ENCODE measurements at regions of chr2 and their contacts with region 1.

Region 1: GRCh38 chr2:218892693-218893348 is 12.2 kb downstream of the WNT10A start:
- DNase-seq: peak in 1 of 2 experiments; percentile 82
- H3K4me3 ChIP-seq: peak overlapping the region in 3 of 4 experiments; percentile 26 to 55 (median 32); a peak in 5 of 8 replicates
- H3K27ac ChIP-seq: no peak overlapping the region
- H3K4me1 ChIP-seq: peaks cover 3 to 46% (median 17%) of the 10 kb centered on the region in 4 experiments
- H3K27me3 ChIP-seq: peaks cover 80 to 95% (median 92%) of the 10 kb centered on the region in 4 experiments
- CTCF ChIP-seq: peak in 2 of 3 experiments; percentile 43 to 62; a peak in 2 of 4 replicates
- EP300 ChIP-seq: no peak
- POLR2A ChIP-seq: no peak
- RAD21 ChIP-seq: peak in 1 of 2 experiments; percentile 9; a peak in 1 of 4 replicates

Region 2: DNA sequence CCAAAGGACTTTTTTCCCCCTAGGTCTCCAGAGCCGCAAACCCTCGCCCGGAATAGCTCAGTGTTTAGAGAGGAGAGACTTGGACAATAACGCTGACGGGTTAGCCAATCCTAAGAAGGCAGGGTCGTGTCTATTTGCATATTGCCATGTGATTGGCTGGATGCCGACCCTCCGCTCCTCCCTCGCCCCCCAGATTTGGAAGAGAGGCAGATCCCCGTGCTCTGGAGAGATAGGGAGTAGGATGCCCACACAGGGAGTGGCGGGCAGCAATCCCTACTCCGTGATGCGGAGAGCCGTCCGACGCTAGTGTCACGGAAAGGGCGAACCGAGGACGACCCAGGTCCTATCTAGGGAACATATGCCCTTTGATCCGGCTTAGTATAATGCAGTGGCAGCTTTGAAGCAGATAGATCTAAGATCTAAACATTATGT is 31.9 kb before region 1 on chr2:
- CTCF ChIA-PET with region 1: interaction called, 22 read pairs
- POLR2A ChIA-PET with region 1: interaction called, 3 read pairs
- DNase-seq: peak; percentile 80 to 82
- H3K4me3 ChIP-seq: peak overlapping the region in 2 of 4 experiments; percentile 19 to 53; a peak in 3 of 8 replicates
- H3K27ac ChIP-seq: no peak overlapping the region
- H3K4me1 ChIP-seq: peaks cover 6 to 33% (median 17%) of the 10 kb centered on the region in 4 experiments
- H3K27me3 ChIP-seq: peaks cover 67 to 94% (median 90%) of the 10 kb centered on the region in 4 experiments
- CTCF ChIP-seq: no peak
- EP300 ChIP-seq: no peak
- POLR2A ChIP-seq: no peak
- RAD21 ChIP-seq: no peak

Region 3: GRCh38 chr2:218908721-218909619 is 16.1 kb after region 1 on chr2:
- CTCF ChIA-PET with region 1: interaction called, 66 read pairs
- POLR2A ChIA-PET with region 1: interaction called, 10 read pairs
- DNase-seq: peak; percentile 89 to 96
- H3K4me3 ChIP-seq: peak overlapping the region; percentile 75 to 90 (median 82)
- H3K27ac ChIP-seq: peak overlapping the region; percentile 73; the same call in 1 of the 2 replicates
- H3K4me1 ChIP-seq: peaks cover 0 to 4% (median 1%) of the 10 kb centered on the region in 4 experiments; a peak in 2 of 7 replicates
- H3K27me3 ChIP-seq: peaks cover 2 to 28% (median 17%) of the 10 kb centered on the region in 4 experiments; a peak in 6 of 7 replicates
- CTCF ChIP-seq: no peak
- EP300 ChIP-seq: no peak
- POLR2A ChIP-seq: peak; percentile 61 to 95
- RAD21 ChIP-seq: no peak

Region 4: DNA sequence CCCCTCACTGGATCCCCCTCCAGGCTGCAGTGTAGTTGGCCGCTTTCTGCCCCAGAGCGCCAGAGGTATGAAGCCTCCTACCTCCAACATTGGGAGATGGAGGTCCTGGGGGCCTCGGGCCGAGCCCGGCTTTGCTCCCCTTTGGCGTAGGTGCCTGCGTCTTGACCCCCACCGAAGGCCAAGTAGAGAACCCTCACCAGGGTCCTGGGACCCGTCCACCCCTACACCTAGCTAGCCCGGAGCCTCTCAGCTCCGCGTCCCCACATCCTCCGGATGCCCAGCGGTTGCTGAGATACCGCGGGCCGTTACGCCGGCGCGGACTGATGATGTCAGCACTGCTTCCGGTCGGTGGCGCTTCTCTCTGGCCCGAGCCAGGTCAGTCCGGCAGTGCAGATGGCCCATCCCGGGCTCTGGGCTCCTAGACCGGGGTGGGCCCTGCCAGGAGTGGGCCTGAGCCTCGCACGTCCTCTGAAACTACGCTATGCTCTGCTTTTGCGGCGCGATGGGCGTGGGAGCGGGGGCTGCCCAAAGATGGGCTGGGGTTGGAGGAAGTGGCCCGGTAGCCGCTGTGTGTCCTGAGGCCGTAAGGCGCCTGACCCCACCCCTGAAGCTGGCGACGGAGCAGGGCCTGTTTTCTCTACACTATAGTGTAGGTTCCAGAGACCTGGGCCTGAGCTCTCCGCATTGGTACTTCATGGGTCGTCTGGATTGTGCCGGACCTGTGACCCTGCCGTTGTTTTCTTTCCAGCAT is 352.5 kb after region 1 on chr2 and contains the starts of genes GLB1L and STK16:
- CTCF ChIA-PET with region 1: no interaction called
- POLR2A ChIA-PET with region 1: no interaction called
- DNase-seq: peak in 1 of 2 experiments; percentile 98
- H3K4me3 ChIP-seq: peak within 1 kb of the TSS; percentile 74 to 81 (median 80)
- H3K27ac ChIP-seq: peak within 1 kb of the TSS; percentile 91
- H3K4me1 ChIP-seq: peaks cover 0 to 5% (median 3%) of the 10 kb centered on the region in 4 experiments; a peak in 3 of 7 replicates
- H3K27me3 ChIP-seq: no peaks in the 10 kb centered on the region
- CTCF ChIP-seq: no peak
- EP300 ChIP-seq: no peak
- POLR2A ChIP-seq: peak in 1 of 2 experiments; percentile 91; a peak in 2 of 3 replicates
- RAD21 ChIP-seq: no peak
- total RNA-seq, gene GLB1L: 3.2 and 3.7 TPM in 2 replicates
- total RNA-seq, gene STK16: 17.0 and 21.3 TPM in 2 replicates

Measured in H1 (cell line).